Heart left ventricle (tissue), 16 donors: ENCODE measurements at regions of chr17 and their contacts with region 1.

Region 1: GRCh38 chr17:55238179-55238930 is 26.4 kb upstream of the HLF start:
- DNase-seq: peak; percentile 94 to 96 (median 95)
- ATAC-seq: peak; percentile 95 to 100 (median 100)
- H3K4me3 ChIP-seq: peak overlapping the region; percentile 30 to 68 (median 56)
- H3K27ac ChIP-seq: peak overlapping the region in 11 of 12 donors; percentile 43 to 85 (median 68)
- H3K4me1 ChIP-seq: peaks cover 0 to 22% (median 8%) of the 10 kb centered on the region in 12 donors
- H3K27me3 ChIP-seq: peaks cover 0 to 7% (median 0%) of the 10 kb centered on the region in 9 donors
- CTCF ChIP-seq: peak in 2 of 12 donors; percentile 5 to 22
- POLR2A ChIP-seq: peak in 1 of 2 donors; percentile 32

Region 2: GRCh38 chr17:54968262-54968987 is 269.9 kb before region 1 on chr17 and contains the starts of genes COX11 and STXBP4:
- intact Hi-C with region 1: loop called in 2 of 10 experiments (anchors 2 to 10 kb)
- DNase-seq: peak; percentile 95 to 96 (median 95)
- ATAC-seq: peak; percentile 99
- H3K4me3 ChIP-seq: peak within 1 kb of the TSS; percentile 72 to 97 (median 89)
- H3K27ac ChIP-seq: peak within 1 kb of the TSS; percentile 63 to 92 (median 86)
- H3K4me1 ChIP-seq: peaks cover 0 to 30% (median 17%) of the 10 kb centered on the region in 12 donors
- H3K27me3 ChIP-seq: no peaks in the 10 kb centered on the region
- CTCF ChIP-seq: peak in 11 of 12 donors; percentile 2 to 61 (median 33)
- POLR2A ChIP-seq: peak in 1 of 2 donors; percentile 90
- total RNA-seq, gene COX11: 42.5 to 73.1 (median 55.6) TPM
- total RNA-seq, gene STXBP4: 2.2 to 7.8 (median 4.8) TPM

Region 3: DNA sequence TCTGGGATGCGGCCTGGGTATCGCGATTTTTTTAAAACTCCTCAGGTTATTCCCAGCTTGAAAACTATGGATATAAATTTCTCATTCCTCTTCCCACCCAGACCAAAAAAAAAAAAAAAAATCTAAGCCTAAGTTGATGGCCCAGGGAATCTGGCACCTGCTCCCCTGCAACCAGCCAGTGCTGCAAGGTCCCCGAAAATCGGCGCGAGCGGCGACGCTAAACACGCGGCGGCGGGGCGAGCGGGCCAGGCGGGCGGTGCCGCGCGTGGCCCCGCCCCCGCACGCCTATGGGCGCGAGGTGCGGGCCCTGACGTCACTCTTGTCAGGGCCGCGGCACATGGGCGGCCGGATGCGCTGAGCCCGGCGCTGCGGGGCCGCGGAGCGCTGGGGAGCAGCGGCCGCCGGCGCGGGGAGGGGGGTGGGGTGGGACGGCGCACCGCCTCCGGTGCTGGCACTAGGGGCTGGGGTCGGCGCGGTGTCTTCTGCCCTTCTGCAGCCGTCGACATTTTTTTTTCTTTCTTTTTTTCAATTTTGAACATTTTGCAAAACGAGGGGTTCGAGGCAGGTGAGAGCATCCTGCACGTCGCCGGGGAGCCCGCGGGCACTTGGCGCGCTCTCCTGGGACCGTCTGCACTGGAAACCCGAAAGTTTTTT is 26.4 kb after region 1 on chr17 and contains the start of gene HLF:
- intact Hi-C with region 1: loop called (anchors 1 to 2 kb)
- DNase-seq: peak; percentile 81 to 90 (median 87)
- ATAC-seq: peak; percentile 86 to 98 (median 93)
- H3K4me3 ChIP-seq: peak within 1 kb of the TSS; percentile 50 to 89 (median 68)
- H3K27ac ChIP-seq: peak within 1 kb of the TSS; percentile 36 to 94 (median 82)
- H3K4me1 ChIP-seq: peaks cover 0 to 52% (median 34%) of the 10 kb centered on the region in 12 donors
- H3K27me3 ChIP-seq: peaks cover 0 to 60% (median 0%) of the 10 kb centered on the region in 9 donors
- CTCF ChIP-seq: no peak
- POLR2A ChIP-seq: peak in 1 of 2 donors; percentile 55
- total RNA-seq, gene HLF: 7.5 to 46.3 (median 28.7) TPM

Region 4: GRCh38 chr17:55285340-55286301 is 47.3 kb after region 1 on chr17:
- intact Hi-C with region 1: loop called in 1 of 10 experiments (anchors 5 kb)
- DNase-seq: peak; percentile 87 to 98 (median 92)
- ATAC-seq: peak; percentile 86 to 91 (median 90)
- H3K4me3 ChIP-seq: peak overlapping the region in 3 of 12 donors; percentile 6 to 23 (median 17)
- H3K27ac ChIP-seq: peak overlapping the region; percentile 79 to 98 (median 90)
- H3K4me1 ChIP-seq: peaks cover 0 to 94% (median 57%) of the 10 kb centered on the region in 12 donors
- H3K27me3 ChIP-seq: no peaks in the 10 kb centered on the region
- CTCF ChIP-seq: no peak
- POLR2A ChIP-seq: no peak

Region 5: GRCh38 chr17:55295411-55296170 is 57.2 kb after region 1 on chr17:
- intact Hi-C with region 1: loop called in 7 of 10 experiments (anchors 1 to 5 kb)
- DNase-seq: peak in 3 of 5 donors; percentile 48 to 49 (median 48)
- ATAC-seq: peak; percentile 78 to 86 (median 86)
- H3K4me3 ChIP-seq: no peak overlapping the region
- H3K27ac ChIP-seq: peak overlapping the region in 10 of 12 donors; percentile 9 to 62 (median 36)
- H3K4me1 ChIP-seq: peaks cover 0 to 24% (median 9%) of the 10 kb centered on the region in 12 donors
- H3K27me3 ChIP-seq: no peaks in the 10 kb centered on the region
- CTCF ChIP-seq: peak; percentile 71 to 92 (median 86)
- POLR2A ChIP-seq: no peak

Region 6: GRCh38 chr17:55348749-55349354 is 110.5 kb after region 1 on chr17:
- intact Hi-C with region 1: loop called in 3 of 10 experiments (anchors 5 to 10 kb)
- DNase-seq: peak in 4 of 5 donors; percentile 16 to 37 (median 34)
- ATAC-seq: peak in 3 of 4 donors; percentile 69 to 78 (median 76)
- H3K4me3 ChIP-seq: no peak overlapping the region
- H3K27ac ChIP-seq: no peak overlapping the region
- H3K4me1 ChIP-seq: peaks cover 0 to 9% (median 0%) of the 10 kb centered on the region in 12 donors
- H3K27me3 ChIP-seq: no peaks in the 10 kb centered on the region
- CTCF ChIP-seq: peak; percentile 77 to 95 (median 85)
- POLR2A ChIP-seq: no peak

Region 7: DNA sequence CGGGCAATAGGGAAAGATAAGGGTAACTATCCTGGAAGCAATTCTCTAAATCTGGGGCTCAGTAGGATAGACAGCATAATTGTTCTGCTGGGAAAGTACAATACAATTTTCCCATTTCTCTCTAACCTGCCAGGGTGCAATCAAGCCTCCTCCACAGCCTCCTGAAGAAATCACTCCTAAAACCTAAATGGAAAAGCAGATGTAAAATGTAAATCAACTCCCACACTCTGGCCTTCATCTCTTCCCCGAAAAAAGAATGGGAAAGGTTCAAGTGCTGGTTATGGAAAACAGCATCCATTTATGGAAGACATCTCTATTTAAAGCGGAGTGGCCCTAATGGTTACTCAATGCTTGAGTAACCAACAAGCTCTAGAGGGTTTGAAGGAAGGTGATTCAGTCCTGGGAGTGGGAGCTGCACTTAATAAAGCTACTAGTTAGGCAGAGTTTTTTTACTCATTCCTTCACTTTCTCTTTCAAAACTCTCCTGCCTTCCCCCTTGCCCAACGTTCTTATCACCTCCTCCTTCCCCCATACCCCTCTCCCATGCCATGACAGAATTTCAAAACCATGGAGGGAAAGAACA is 178.2 kb after region 1 on chr17:
- intact Hi-C with region 1: no loop called
- DNase-seq: no peak
- ATAC-seq: peak in 1 of 4 donors; percentile 1
- H3K4me3 ChIP-seq: no peak overlapping the region
- H3K27ac ChIP-seq: peak overlapping the region; percentile 41 to 96 (median 70)
- H3K4me1 ChIP-seq: peaks cover 0 to 44% (median 21%) of the 10 kb centered on the region in 12 donors
- H3K27me3 ChIP-seq: no peaks in the 10 kb centered on the region
- CTCF ChIP-seq: no peak
- POLR2A ChIP-seq: no peak

Region 8: GRCh38 chr17:55513885-55514591 is 275.7 kb after region 1 on chr17:
- intact Hi-C with region 1: loop called in 1 of 10 experiments (anchors 10 kb)
- DNase-seq: peak in 4 of 5 donors; percentile 42 to 63 (median 58)
- ATAC-seq: peak in 3 of 4 donors; percentile 53 to 63 (median 58)
- H3K4me3 ChIP-seq: no peak overlapping the region
- H3K27ac ChIP-seq: no peak overlapping the region
- H3K4me1 ChIP-seq: peaks cover 0 to 8% (median 0%) of the 10 kb centered on the region in 12 donors
- H3K27me3 ChIP-seq: peaks cover 0 to 6% (median 0%) of the 10 kb centered on the region in 9 donors
- CTCF ChIP-seq: peak; percentile 86 to 98 (median 92)
- POLR2A ChIP-seq: no peak